AG04449 (cell line): ENCODE measurements at regions of chr7 and their contacts with region 1.

Region 1: DNA sequence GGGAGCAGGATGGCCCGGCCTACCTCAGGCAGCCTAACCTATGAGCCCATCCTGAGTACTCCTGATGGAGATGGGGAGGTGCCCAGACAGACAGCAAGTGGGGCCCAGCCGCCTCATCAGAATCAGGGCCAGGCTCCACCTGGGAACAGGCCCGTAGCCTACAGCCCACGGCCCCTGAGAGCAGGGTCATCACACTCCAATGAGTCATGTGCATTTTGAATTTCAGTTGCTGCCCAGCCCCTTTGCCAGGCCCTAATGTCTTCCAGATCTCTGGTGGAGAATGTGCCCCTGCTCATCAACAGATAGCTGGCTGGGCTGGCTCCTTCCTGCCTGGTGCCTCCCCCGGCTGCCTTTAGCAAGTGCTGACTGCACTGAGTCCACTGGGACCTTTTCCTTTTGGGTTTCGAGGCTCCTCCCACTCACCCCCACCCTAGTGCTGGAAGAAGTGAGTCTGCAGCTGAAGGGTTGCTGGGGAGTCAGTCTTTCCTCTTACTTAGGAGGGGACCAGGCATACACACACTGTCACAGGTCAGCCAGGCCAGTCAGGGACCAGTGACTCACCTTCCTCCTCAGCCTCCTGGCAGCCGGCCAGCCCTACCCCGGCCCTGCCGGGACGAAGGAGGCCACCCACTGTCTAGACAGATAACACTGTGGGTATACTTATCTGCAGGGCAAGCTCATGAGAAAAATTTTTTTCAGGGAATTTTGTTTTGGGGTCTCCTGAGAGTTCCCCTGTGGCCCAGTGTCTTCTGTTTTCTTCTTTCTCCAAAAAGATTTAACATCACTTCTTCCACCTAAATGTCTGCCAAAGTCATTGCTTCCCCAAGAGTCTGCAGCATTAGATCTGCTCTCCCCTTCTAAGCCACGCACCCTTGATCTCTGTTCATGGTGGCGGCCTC is 9.1 kb upstream of the ASIC3 start:
- DNase-seq: no peak
- H3K4me3 ChIP-seq: no peak overlapping the region
- CTCF ChIP-seq: no peak

Region 2: DNA sequence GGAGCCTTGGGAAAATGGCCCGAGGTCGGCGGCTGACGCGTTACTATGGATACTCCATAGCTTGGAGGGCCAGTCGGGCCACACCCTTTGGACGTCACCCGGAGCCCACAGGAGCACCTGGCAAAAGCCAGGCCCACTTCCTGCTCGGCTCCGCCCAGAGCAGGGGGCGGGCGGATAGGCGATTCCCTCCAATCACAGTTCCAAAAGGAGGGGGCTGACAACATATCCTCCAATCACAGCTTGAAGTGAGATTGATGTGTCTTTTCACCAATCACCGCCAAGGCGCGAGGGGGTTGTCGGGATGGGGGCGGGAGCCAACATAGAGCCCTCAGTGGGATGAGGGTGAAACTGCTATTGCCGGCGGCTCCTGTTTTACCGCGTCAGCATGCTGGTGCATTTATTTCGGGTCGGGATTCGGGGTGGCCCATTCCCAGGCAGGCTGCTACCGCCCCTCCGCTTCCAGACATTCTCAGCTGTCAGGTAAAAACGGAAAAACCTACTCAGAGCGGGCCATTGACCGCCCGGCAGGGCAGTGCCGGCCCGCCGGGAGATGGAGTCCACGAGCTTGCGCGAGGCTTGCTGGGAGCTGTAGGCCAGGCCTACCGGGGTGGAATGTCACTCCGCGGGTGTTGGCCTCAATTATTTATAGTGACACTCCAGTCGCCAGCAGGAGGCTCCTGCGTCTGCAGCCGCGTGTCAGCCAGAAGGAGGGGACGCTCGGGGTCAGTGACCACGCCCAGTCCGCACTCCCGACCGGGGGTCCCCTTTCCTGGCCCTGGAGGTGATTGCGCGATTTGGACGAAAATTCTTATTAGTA is 10.9 kb before region 1 on chr7 and contains the start of gene ABCB8:
- CTCF ChIA-PET with region 1: interaction called, 4 read pairs
- POLR2A ChIA-PET with region 1: interaction called, 13 read pairs
- DNase-seq: peak; percentile 90
- H3K4me3 ChIP-seq: peak within 1 kb of the TSS; percentile 83
- CTCF ChIP-seq: peak; percentile 42